ENCODE measurements at regions of chr10 and their contacts with region 1.

Region 1: DNA sequence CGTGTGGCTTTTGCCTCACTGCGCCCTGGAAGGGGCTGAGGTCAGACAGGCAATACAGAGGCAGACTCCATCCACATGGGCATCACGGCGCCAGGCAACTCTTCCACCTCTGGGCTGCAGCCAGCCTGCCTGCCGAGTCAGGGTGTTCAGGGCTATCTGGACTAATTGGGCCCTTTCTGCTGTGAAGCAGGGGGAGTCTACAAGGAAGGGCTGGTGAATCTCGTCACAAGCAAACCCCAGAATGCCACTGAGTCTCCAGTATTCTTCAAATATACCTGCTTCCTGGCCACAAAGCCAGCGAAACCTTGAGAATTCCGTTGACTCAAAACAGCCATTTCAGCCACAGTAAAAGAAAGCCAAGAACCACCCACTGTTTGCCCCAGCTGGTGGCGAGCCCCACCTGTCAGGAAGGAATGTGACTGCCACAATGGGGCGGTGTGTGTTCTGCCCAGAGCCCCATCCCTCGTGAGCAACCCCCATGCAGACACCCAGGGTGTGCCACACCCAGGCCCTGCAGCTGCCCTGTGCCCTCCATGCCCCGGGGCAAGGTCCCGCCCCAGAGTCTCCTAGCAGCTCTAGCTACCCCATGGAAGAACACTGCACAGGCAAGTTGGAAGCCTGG is 117.3 kb downstream of the FAM53B start:
- DNase-seq: no peak
- ATAC-seq: no peak

Region 2: DNA sequence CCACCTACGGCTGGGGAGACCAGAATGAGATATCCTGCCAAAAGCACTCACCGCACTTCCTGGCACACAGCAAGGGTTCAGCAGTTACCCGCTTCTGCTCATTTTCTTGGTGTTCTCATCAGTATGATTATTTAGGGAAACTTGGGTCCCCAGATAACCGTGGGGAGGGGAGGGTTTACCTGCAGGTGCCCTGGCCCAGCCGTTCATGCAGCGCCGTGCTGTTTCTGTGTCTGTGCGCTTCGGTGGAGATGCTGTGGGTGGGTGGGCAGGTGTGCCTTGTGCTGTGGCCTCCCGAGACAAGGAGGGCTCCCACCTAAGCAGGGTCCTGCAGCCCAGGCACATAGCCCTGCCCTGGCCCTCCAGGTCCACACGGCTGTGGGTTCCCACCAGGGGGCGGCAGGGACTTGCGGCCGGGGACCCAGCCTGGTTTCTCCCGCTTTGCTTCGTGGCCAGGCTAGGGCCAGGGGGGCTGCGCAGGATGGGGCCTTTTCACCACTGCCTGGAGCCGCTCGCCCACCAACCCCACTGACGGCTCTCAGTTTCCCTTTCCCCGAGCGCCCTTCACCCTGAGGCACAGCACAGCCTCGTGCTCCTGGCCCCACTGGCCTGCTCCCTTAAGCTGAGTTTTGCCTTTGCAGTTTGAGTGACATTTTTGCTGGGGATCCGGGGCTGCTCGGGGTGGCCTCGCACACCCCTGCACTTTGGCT is 86.8 kb before region 1 on chr10:
- intact Hi-C with region 1: loop called in 1 of 2 experiments (anchors 10 kb)
- DNase-seq: peak; percentile 79
- ATAC-seq: peak; percentile 81 to 86

Region 3: DNA sequence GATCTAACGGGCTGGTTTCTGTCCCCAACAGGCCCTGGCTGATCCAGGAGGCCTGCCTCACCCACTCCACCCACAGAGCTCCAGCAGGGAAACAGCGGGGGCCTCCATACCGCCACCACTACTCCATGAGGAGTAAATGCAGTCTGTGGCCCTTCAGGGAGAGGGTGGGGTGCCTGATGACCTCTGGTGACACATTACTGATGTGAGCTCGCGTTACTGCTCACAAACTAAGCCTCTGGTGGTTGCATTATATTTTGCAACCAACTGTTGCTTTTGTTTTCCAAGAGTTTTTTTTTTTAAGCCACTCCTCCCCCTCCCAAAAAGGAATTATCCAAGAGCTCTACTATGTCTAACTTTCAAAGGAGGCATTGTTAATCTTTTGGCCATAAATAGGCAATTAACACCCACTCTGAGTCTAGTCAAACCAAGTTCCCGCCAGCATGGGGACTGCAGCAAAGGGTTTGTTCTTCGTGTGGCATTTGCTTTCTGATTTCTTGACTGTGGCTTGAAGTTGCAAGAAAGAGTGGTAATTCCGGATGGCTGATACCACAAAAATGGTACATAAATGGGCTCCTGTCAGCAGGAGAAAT is 44.7 kb after region 1 on chr10:
- intact Hi-C with region 1: loop called in 1 of 2 experiments (anchors 5 kb)
- DNase-seq: peak; percentile 68
- ATAC-seq: peak; percentile 36 to 53